ENCODE measurements at regions of chr3 and their contacts with region 1.

Region 1: DNA sequence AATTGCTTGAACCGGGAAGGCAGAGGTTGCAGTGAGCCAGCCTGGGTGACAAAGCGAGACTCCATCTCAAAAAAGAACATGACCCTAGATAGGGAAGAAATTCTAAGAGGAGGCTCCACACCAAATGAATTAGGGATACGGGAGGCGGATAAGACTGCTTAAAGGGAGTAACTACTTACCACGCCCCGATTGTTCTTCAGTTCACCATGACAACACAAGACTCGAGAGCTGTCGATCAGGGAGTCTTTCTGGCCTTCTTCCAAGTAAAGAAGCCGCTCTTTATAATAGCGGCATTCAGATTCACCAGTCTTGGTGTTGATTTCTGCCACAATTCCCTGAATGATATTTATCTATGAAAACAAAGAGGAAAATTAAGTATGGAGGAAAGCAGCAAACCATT is 53.9 kb upstream of the TASOR start:
- ATAC-seq: peak in 5 of 8 experiments; percentile 17 to 61 (median 55)
- H3K4me3 ChIP-seq: no peak overlapping the region
- H3K27ac ChIP-seq: no peak overlapping the region
- H3K4me1 ChIP-seq: no peaks in the 10 kb centered on the region

Region 2: DNA sequence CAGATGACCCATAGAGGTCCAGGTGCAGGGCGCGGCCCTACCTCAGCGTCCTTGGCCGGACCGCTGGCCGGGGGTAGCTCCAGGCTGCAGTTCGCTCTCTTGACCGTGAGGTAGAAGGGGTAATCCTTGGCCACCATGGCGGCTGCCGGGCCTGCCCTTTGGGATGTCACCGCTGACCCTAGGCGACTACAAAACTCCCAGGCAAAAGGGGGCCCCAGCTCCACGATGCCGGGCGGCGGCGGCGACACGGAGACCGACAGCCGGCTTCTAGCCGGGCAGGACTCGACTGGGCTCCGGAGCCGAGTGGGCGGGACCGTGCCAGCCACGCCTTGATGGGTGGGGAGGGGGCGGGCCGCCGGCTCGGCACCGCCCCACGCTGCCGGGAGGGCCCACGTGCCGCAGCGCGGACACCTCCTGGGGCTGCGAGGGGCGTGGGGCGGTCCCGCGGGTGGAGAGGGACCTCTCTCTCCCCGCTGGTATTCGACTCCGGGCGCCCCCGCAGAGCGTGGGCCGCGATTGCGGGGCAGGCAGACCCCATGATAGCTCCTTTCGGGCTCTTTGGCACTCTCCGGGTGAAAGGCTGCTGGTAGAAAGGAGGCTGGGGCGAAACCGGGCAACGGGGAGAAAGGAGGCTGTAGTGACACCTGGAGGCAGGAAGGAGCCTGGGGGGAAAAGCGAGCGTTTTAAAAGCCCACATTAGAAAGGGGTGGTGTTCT is 64.8 kb after region 1 on chr3 and contains the start of gene ARHGEF3:
- in situ Hi-C with region 1: loop called in 1 of 9 experiments (anchors 10 kb)
- ATAC-seq: peak; percentile 90 to 96 (median 94)
- H3K4me3 ChIP-seq: peak within 1 kb of the TSS; percentile 64 to 73 (median 70)
- H3K27ac ChIP-seq: no peak within 1 kb of the TSS
- H3K4me1 ChIP-seq: peaks cover 0 to 30% of the 10 kb centered on the region in 2 donors
- total RNA-seq, gene ARHGEF3: 4.5 to 137 (median 14.3) TPM

Region 3: DNA sequence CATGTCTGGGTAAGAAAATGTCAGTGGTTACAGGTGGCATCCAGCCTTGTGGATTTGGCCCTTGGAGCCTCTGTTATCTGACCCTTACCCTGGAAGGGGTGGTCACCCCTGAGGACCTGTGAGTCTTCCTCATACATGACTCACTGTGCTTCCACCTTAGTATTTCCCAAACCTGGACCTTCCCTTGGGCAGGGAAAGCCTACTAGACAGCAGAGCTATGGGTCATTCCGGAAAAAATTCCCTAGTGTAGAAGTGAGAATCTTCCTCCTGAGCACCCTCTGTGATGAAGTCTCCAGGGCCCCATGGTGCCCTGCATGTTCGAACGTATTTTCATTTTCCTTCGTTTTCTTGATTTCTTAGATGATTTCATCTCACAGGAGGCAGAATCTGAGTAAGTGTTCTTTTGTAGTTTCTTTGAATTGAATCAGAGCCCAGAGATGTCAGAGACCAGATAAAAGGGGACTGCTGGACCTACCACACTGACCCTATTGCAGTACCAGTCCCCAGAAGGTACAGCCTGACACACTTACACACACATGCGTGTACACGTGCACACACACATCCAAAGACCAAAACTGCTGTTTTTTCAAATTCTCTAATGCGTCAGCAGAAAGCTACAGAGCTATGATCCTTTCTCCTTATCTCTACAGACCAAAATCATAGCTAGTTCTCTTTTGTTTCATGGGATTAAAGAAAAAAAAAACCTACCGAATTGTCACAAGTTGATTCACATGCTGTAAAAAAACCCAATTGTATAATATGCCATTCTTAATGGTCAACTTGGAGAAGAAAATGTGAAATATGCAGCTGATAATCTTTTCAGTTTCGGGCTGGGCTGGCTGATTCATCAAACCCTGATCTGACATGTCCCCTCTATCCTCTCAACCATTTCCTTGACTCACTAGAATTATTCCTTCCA is 115.2 kb after region 1 on chr3:
- in situ Hi-C with region 1: no loop called
- ATAC-seq: no peak
- H3K4me3 ChIP-seq: no peak overlapping the region
- H3K27ac ChIP-seq: no peak overlapping the region
- H3K4me1 ChIP-seq: peaks cover 5 to 8% of the 10 kb centered on the region in 2 donors